ENCODE measurements at regions of chr9 and their contacts with region 1.

Region 1: DNA sequence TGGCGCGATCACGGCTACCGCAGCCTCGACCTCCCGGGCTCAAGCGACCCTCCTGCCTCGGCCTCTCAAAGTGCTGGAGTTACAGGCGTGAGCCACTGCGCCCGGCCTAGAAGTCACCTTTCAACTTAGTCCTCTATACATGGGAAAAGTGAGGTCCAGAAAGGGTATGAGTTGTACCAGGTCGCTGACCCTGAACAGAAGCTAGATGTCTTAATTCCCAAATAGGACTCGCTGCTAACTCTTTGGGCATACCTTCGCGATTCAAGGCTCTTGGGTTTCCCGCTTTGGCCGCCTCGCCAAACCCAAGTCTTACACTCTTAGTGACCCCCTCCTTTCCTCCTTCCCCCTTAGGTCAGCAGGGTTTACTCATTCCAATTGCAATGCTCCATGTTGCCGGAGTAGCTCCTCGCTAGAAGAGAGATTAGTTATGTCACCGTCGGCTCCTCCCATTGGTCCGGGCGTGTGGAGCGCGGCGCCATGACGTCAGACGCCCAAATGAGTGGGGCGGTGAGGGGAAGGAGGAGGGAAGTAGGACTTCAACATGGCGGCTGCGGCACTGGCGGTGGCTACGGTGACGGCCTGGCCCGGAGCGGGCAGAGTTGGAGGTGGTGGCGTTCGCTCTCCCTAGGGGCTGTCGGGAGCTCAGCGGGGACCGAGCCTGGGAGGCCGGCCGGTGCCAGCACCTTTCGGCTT is at the start of gene UBAP1:
- DNase-seq: peak; percentile 83 to 97 (median 93)
- ATAC-seq: peak; percentile 99
- H3K4me3 ChIP-seq: peak within 1 kb of the TSS; percentile 93
- H3K4me3 Mint-ChIP-seq: peak within 1 kb of the TSS; percentile 93 to 100 (median 96)
- H3K27ac ChIP-seq: peak within 1 kb of the TSS; percentile 97
- H3K27ac Mint-ChIP-seq: peak within 1 kb of the TSS; percentile 94 to 99 (median 98)
- H3K4me1 ChIP-seq: peaks cover 0 to 8% of the 10 kb centered on the region in 2 donors
- H3K4me1 Mint-ChIP-seq: peaks cover 7 to 33% (median 21%) of the 10 kb centered on the region in 7 donors
- H3K27me3 ChIP-seq: no peaks in the 10 kb centered on the region
- H3K27me3 Mint-ChIP-seq: no peaks in the 10 kb centered on the region
- total RNA-seq, gene UBAP1: 31.1 to 39.9 (median 32.8) TPM

Region 2: GRCh38 chr9:34190996-34191892 is 12.6 kb after region 1 on chr9:
- CTCF ChIA-PET with region 1: no interaction called
- POLR2A ChIA-PET with region 1: interaction called, 3 read pairs
- intact Hi-C with region 1: loop called in 1 of 2 experiments (anchors 1 kb)
- DNase-seq: no peak
- ATAC-seq: no peak
- H3K4me3 ChIP-seq: no peak overlapping the region
- H3K4me3 Mint-ChIP-seq: peak overlapping the region in 1 of 10 donors; percentile 11
- H3K27ac ChIP-seq: no peak overlapping the region
- H3K27ac Mint-ChIP-seq: peak overlapping the region in 7 of 9 donors; percentile 59 to 85 (median 65)
- H3K4me1 ChIP-seq: peaks cover 9 to 19% of the 10 kb centered on the region in 2 donors
- H3K4me1 Mint-ChIP-seq: peaks cover 28 to 78% (median 66%) of the 10 kb centered on the region in 7 donors
- H3K27me3 ChIP-seq: no peaks in the 10 kb centered on the region
- H3K27me3 Mint-ChIP-seq: no peaks in the 10 kb centered on the region

Region 3: DNA sequence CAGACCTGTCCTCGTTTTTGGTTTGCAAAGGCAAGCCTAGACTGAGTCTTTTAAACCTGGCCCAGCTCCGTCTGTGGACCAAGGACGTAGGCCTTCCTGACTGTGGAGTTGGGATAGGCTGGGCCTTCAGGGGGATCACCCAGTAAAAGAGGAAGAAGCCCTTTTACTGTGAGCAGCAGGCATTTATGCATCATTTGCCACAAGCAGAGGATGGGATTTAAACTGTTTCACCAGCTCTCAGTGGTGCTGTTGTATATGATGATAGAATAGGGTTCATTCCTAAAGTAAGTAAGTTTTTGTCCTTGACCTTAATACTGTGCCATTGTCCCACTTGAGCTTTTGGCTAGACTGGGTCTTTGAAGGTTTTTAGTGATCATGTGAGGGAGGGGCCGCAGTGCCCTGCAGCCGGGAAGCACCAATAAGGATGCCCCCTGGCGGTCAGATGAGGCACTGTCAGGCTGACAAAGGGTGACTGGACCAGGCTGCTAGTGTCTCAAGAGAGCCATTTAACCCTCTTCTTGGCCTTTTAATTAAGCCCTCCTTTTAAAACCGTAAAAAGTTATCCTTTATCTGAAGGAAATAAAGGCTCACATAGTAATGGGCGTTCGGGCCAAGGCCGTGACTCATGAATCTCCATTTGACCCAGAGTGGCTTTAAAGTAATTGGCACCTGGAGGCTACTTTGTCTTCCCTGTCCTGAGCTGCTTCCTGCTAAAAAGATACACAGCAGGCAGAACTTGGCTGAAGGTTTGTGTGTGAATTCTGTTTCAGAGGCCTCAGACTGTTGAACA is 74.2 kb after region 1 on chr9:
- CTCF ChIA-PET with region 1: interaction called, 3 read pairs
- POLR2A ChIA-PET with region 1: interaction called, 4 read pairs
- intact Hi-C with region 1: loop called (anchors 1 to 5 kb)
- DNase-seq: peak; percentile 38 to 70 (median 56)
- ATAC-seq: peak; percentile 85
- H3K4me3 ChIP-seq: no peak overlapping the region
- H3K4me3 Mint-ChIP-seq: no peak overlapping the region
- H3K27ac ChIP-seq: no peak overlapping the region
- H3K27ac Mint-ChIP-seq: peak overlapping the region in 7 of 9 donors; percentile 15 to 69 (median 46)
- H3K4me1 ChIP-seq: peaks cover 0 to 6% of the 10 kb centered on the region in 2 donors
- H3K4me1 Mint-ChIP-seq: peaks cover 9 to 21% (median 17%) of the 10 kb centered on the region in 7 donors
- H3K27me3 ChIP-seq: no peaks in the 10 kb centered on the region
- H3K27me3 Mint-ChIP-seq: no peaks in the 10 kb centered on the region